AG04449 (cell line): ENCODE measurements at regions of chr16 and their contacts with region 1.

Region 1: DNA sequence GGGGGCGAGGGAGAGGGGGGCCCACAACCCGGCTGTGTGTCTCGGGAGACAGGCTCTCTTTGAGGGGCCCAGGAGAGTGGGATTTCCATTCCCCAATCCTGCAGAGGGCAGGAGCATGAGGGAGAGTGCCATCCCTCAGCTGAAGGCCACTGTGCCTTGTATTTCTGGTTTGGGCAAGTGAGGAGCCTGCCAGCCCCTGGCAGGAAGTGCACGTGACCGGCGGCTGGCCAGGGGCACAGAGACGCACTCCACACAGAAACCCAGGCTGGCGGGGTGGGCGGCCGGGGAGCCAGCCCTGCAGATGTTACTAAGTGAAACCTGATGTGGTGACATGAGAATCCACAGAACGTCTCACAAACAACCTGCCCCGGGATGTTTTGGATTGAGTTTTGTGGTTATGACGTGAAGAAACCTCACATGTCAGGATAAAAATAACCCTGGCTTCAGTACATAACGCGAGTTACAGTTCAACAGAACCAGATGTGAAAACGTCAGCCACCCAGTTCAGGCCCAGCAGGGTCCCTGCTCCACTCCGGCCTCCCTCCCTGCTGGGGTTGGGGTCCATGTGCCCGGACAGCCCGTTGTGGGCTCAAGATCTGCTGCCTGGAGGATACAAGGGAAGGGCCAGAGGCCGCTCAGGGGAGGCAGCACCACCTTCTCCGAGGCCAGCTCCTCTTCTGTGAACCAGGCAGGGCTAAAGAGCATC is 51.7 kb upstream of the MTSS2 start:
- DNase-seq: peak; percentile 63
- H3K4me3 ChIP-seq: no peak overlapping the region
- CTCF ChIP-seq: no peak

Region 2: DNA sequence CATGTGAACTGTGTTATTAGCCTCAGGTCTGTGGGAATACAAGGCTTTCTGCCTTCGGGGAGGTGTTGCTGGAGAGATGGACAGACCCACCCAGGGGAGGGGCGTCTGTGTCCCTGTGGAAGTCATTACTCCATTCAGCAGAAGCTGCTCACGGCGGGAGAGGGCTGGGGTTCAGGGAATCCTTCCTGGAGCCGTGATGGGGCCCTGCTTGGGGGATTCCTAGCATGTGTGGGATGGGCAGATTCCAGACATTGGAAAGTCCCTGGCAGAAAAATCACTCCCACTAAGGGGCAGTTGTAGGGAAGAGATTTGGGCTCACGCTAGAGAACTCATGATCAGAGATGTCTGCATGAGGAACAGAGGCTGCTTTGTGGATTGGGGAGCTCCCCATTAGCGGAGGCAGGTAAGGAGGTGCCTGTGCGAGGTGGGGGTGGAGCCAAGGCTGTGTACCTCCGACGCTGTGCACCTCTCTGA is 147.5 kb before region 1 on chr16:
- CTCF ChIA-PET with region 1: no interaction called
- POLR2A ChIA-PET with region 1: no interaction called
- DNase-seq: peak; percentile 49
- H3K4me3 ChIP-seq: peak overlapping the region; percentile 15; the same call in 1 of the 2 replicates
- CTCF ChIP-seq: no peak

Region 3: GRCh38 chr16:70679666-70680494 is 57.6 kb before region 1 on chr16:
- CTCF ChIA-PET with region 1: interaction called, 16 read pairs
- POLR2A ChIA-PET with region 1: no interaction called
- DNase-seq: no peak
- H3K4me3 ChIP-seq: no peak overlapping the region
- CTCF ChIP-seq: peak; percentile 51

Region 4: GRCh38 chr16:70691223-70692129 is 46.1 kb before region 1 on chr16:
- CTCF ChIA-PET with region 1: interaction called, 18 read pairs
- POLR2A ChIA-PET with region 1: interaction called, 4 read pairs
- DNase-seq: peak; percentile 94
- H3K4me3 ChIP-seq: no peak overlapping the region
- CTCF ChIP-seq: no peak

Region 5: GRCh38 chr16:70725912-70726828 is 11.4 kb before region 1 on chr16:
- CTCF ChIA-PET with region 1: interaction called, 10 read pairs
- POLR2A ChIA-PET with region 1: no interaction called
- DNase-seq: no peak
- H3K4me3 ChIP-seq: no peak overlapping the region
- CTCF ChIP-seq: no peak

Region 6: GRCh38 chr16:70759666-70760065 is 22.1 kb after region 1 on chr16:
- CTCF ChIA-PET with region 1: interaction called, 13 read pairs
- POLR2A ChIA-PET with region 1: interaction called, 3 read pairs
- DNase-seq: no peak
- H3K4me3 ChIP-seq: no peak overlapping the region
- CTCF ChIP-seq: no peak

Region 7: GRCh38 chr16:71214746-71215381 is 477.3 kb after region 1 on chr16:
- CTCF ChIA-PET with region 1: no interaction called
- POLR2A ChIA-PET with region 1: no interaction called
- DNase-seq: no peak
- H3K4me3 ChIP-seq: no peak overlapping the region
- CTCF ChIP-seq: no peak